ENCODE measurements at regions of chr14 and their contacts with region 1.

Region 1: DNA sequence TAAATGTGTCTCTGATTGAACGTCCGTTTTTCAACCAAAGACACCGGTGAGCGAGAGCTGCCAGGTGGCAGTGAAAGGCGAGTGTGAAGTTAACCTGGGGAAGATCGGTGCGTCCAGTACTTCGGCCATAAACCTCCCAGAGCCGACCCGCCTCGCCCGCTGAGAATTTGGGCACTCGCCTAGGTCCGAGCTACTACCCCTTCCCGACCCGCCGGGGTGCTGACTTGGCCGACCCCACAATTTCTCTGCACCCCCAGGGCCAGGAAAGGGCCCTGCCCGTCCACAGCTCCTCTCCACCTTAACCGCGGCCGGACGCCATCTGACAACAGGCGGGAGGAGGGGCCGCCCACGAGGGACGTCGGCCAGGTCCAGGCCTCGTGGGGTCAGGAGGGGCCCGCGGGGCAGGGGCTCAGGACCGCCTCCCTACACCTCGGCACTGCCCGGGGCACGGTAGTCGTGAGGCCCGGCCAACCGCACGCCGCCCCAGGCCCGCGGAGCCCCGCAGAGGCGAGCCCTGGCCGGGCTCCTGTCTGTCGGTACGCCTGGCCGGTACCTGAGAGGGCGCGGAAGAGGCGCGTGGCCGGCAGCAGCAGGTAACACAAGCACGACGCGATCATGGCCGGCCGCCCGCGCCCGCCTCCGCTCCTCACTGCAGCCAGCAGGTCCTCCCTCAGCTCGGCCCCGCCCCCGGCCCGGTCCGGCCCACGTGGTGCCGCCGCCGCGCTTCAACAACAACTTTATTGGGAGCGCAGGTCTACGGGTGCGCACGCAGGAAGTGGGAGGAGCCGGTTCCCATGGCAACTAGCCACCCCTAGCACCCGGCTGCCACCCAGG is at the start of gene ANGEL1:
- DNase-seq: peak; percentile 98
- ATAC-seq: peak; percentile 90
- H3K4me3 Mint-ChIP-seq: peak within 1 kb of the TSS; percentile 97
- H3K27ac Mint-ChIP-seq: peak within 1 kb of the TSS; percentile 93
- H3K4me1 Mint-ChIP-seq: peaks cover 27% of the 10 kb centered on the region
- H3K27me3 Mint-ChIP-seq: no peaks in the 10 kb centered on the region
- total RNA-seq, gene ANGEL1: 15.8 to 17.2 TPM

Region 2: GRCh38 chr14:76710056-76711010 is 102.1 kb before region 1 on chr14:
- CTCF ChIA-PET with region 1: interaction called, 36 read pairs
- POLR2A ChIA-PET with region 1: interaction called, 3 read pairs
- intact Hi-C with region 1: loop called (anchors 1 to 2 kb)
- DNase-seq: peak; percentile 51
- ATAC-seq: peak; percentile 49
- H3K4me3 Mint-ChIP-seq: no peak overlapping the region
- H3K27ac Mint-ChIP-seq: no peak overlapping the region
- H3K4me1 Mint-ChIP-seq: no peaks in the 10 kb centered on the region
- H3K27me3 Mint-ChIP-seq: peaks cover 7% of the 10 kb centered on the region

Region 3: GRCh38 chr14:76752744-76753143 is 59.7 kb before region 1 on chr14:
- CTCF ChIA-PET with region 1: no interaction called
- POLR2A ChIA-PET with region 1: no interaction called
- intact Hi-C with region 1: no loop called
- DNase-seq: no peak
- ATAC-seq: no peak
- H3K4me3 Mint-ChIP-seq: no peak overlapping the region
- H3K27ac Mint-ChIP-seq: no peak overlapping the region
- H3K4me1 Mint-ChIP-seq: no peaks in the 10 kb centered on the region
- H3K27me3 Mint-ChIP-seq: peaks cover 4% of the 10 kb centered on the region

Region 4: DNA sequence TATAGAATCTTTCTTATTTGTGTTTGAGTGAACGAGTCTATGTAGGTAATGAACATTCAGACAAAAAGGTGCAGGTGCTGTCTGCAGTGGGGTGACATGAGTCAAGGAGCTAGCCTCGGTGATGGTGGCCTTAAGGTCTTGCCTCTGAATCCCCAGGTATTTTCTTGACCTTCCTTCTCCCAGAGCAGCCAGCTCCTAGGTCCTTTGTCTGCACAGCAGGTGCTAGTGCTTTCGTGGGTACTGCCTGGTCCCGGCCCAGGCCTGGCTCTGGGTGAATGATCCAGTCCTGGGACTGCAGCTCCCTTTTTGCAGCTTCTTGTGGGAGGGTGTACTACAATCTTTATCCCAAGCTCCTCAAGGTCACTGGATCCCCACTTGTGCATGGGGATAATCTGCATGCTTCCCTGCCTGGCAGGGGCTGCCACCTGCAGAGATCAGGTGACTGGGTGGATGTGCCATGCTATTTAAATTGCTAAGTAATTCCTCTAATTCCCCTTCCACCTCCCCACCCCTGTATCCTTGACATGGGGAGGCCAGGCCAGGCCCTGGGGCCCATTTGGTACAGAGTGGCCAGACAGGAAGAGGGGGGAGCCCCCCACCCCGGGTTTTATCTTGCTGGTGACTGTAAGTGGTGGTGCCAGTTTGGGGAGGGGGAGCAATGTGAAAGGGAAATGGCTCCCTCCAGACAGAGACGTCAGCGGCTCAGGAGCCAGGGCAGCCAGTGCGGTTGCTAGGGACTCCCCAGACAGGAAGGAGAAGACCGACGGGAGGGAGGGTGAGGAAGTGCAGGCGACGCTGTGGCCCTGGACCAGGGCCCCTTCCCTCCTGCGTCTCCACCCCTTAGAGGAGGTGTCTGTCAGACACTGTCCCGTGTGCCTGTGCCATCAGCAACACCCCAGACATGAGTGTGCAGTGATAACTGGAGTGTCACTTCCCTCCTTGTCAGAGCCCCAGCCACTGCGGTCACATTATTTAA is 44.5 kb before region 1 on chr14:
- CTCF ChIA-PET with region 1: interaction called, 5 read pairs
- POLR2A ChIA-PET with region 1: interaction called, 4 read pairs
- intact Hi-C with region 1: loop called (anchors 1 to 2 kb)
- DNase-seq: peak; percentile 86
- ATAC-seq: peak; percentile 100
- H3K4me3 Mint-ChIP-seq: peak overlapping the region; percentile 23
- H3K27ac Mint-ChIP-seq: peak overlapping the region; percentile 80
- H3K4me1 Mint-ChIP-seq: peaks cover 17% of the 10 kb centered on the region
- H3K27me3 Mint-ChIP-seq: peaks cover 2% of the 10 kb centered on the region

Region 5: DNA sequence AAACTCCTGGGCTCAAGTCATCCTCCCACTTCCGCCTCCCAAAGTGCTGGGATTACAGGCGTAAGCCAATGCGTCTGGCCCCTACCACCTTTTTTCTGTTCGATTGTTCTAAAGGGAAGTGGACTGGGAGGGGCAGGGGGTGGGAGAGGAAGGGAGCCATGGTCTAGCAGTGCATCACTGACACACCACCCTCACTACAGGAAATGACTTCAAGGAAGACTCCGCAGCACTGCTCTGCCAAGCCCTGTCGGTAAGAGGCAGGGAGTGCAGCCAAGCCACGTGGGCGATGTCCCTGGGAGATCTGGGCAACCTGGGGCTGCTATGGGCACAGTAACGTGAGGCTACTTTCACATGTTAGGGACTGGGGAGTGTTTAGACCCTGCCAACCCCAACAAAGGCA is 31.8 kb after region 1 on chr14:
- CTCF ChIA-PET with region 1: no interaction called
- POLR2A ChIA-PET with region 1: no interaction called
- intact Hi-C with region 1: loop called in 1 of 2 experiments (anchors 1 kb)
- DNase-seq: peak; percentile 84
- ATAC-seq: peak; percentile 100
- H3K4me3 Mint-ChIP-seq: no peak overlapping the region
- H3K27ac Mint-ChIP-seq: peak overlapping the region; percentile 90
- H3K4me1 Mint-ChIP-seq: peaks cover 8% of the 10 kb centered on the region
- H3K27me3 Mint-ChIP-seq: peaks cover 4% of the 10 kb centered on the region

Region 6: DNA sequence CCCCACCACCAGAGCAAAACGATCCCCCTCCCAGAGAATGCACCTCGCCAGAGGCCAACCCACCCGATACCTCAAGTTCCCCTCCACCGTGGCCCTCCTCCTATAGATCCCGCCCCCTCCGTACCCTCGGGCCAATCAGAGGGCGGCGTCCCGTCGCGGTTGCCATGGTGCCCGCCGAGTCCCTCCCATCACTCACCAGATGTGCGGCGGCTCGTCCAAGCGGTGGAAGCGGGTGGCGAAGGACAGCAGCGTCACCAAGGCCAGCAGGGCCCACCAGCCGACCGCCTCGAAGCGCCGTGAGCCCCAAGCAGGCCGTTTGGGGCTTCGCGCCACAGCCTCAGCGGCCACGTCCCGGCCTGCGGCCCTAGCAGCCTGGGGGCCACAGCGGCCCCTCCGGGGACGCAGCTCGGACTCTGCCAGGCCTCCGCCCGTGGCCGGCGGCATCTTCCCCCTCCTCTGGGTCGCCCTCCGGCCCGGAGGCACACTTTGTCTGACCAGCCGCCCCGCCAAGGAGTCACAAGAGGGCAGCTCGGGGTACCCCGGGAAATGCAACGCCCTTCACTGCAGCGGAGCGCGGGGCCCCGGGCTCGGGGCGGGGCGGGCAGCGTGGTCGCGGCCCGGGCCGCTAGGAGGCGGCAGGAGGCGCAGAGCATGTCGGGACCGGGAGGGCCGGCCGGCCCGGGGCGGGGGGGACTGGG is 508.0 kb after region 1 on chr14 and contains the start of gene POMT2:
- CTCF ChIA-PET with region 1: no interaction called
- POLR2A ChIA-PET with region 1: no interaction called
- intact Hi-C with region 1: loop called in 1 of 2 experiments (anchors 2 kb)
- DNase-seq: peak; percentile 95
- ATAC-seq: peak; percentile 53
- H3K4me3 Mint-ChIP-seq: peak within 1 kb of the TSS; percentile 92
- H3K27ac Mint-ChIP-seq: peak within 1 kb of the TSS; percentile 99
- H3K4me1 Mint-ChIP-seq: peaks cover 19% of the 10 kb centered on the region
- H3K27me3 Mint-ChIP-seq: no peaks in the 10 kb centered on the region
- total RNA-seq, gene POMT2: 11.7 to 18.2 TPM

Region 7: GRCh38 chr14:77436042-77436441 is 623.6 kb after region 1 on chr14:
- CTCF ChIA-PET with region 1: no interaction called
- POLR2A ChIA-PET with region 1: no interaction called
- intact Hi-C with region 1: no loop called
- DNase-seq: no peak
- ATAC-seq: no peak
- H3K4me3 Mint-ChIP-seq: no peak overlapping the region
- H3K27ac Mint-ChIP-seq: no peak overlapping the region
- H3K4me1 Mint-ChIP-seq: no peaks in the 10 kb centered on the region
- H3K27me3 Mint-ChIP-seq: no peaks in the 10 kb centered on the region

Measured in activated CD4-positive, alpha-beta T cell treated with anti-CD3 and anti-CD28 coated beads for 36 hours (primary cell).